ENCODE measurements at regions of chr17 and their contacts with region 1.

Region 1: DNA sequence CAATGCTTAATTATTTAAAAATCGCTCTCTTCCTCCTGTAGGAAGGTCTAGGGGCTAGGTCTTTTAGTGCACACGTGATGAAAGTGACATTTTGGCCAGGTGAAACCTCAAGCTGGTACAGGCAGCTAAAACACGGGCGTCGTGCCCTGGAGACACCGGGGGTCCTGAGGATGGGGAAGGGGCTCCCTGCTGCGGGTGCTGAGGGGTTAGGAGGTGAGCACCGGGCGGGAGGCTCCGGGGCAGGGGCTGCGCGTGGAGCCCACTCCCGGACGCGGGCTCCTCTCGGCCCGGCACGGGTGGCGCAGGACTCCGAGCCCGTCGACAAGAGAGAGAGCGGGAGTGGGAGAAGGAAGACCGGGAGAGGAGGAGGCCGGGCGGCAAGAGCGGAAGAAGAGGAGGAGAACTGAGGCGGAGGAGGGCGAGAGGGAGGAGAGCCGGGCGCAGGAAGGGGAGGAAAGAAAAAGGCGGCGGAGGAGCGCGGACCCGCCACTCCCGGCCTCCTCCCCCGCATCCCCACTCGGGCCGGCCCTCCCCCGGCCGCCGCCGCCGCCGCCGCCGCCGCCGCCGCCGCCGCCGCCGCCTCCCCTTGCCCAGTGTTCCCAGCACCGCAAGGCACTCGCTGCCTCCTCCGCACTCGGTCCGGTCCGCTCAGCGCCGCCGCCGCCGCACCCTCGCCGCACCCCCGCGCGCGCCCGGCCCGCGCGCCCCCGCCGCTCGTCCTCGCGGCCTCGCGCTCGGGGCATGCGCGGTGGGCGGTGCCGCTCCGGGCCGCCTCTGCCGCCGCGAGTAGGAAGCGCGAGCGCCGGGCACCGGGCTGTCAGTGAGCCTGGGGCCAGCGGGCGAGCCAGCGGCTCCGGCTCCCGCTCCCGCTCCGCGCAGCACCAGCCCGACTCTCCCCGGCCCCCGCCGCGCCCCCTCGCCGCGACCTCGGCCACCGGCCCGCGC is at the start of gene PRKCA:
- DNase-seq: peak; percentile 77 to 89 (median 82)
- H3K4me3 ChIP-seq: peak within 1 kb of the TSS; percentile 96
- H3K27ac ChIP-seq: peak within 1 kb of the TSS; percentile 57 to 87
- H3K4me1 ChIP-seq: peaks cover 9% of the 10 kb centered on the region
- H3K27me3 ChIP-seq: no peaks in the 10 kb centered on the region
- CTCF ChIP-seq: no peak
- EP300 ChIP-seq: no peak
- POLR2A ChIP-seq: peak; percentile 37
- total RNA-seq, gene PRKCA: 22.3 to 67.6 (median 45.0) TPM

Region 2: DNA sequence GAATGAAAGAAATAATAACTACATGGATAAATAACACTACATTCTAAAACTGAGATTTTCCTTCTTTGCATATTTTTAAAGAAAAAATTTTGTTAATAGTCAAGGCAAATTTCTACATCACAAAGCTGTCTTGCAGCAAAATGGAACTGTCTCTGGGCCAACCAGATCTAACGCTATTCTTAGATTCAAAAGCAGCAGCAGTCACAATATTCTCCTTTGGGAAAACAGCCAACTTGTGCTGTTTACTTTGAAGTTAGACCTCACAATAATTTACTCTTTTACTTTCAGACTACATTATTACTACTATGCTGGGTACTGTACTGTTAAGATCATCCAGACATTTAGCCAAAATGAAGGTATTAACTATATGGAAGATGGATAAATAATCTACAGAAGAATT is 299.3 kb before region 1 on chr17:
- intact Hi-C with region 1: no loop called
- DNase-seq: no peak
- H3K4me3 ChIP-seq: no peak overlapping the region
- H3K27ac ChIP-seq: no peak overlapping the region
- H3K4me1 ChIP-seq: no peaks in the 10 kb centered on the region
- H3K27me3 ChIP-seq: no peaks in the 10 kb centered on the region
- CTCF ChIP-seq: no peak
- EP300 ChIP-seq: no peak
- POLR2A ChIP-seq: no peak

Region 3: DNA sequence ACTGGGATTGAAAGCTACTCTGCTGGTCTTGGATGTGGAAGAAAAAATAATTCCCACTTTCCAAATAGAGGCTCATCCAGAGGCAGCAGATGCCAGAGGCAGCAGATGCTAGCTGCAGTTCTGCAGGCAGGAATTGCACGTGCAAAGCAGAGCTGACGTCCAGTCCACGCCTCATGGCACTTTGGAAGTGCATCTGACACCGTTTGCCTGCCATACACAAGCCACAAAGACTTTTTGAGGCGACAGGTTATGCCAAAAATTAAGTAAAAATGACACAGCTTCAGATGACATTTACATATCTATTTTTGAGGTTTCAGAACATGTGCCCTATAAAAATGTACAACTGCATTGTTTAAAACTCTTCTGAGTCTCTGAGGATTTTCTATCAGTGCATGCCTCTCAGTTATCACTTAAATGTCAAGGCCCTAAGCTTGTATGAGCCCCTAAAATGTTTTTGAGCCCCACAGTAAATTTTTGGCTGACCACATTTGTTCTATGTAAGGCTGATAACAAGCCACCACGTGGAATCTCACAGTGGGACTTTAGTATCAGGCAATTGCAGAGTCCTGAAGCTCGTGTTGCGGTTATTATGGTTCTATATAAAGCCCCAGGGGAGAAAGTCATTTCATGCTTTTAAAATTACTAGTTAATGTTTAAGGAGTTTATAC is 239.5 kb after region 1 on chr17:
- intact Hi-C with region 1: loop called in 1 of 4 experiments (anchors 10 kb)
- DNase-seq: peak in 3 of 5 donors; percentile 34 to 51 (median 49)
- H3K4me3 ChIP-seq: no peak overlapping the region
- H3K27ac ChIP-seq: peak overlapping the region in 1 of 2 donors; percentile 80
- H3K4me1 ChIP-seq: peaks cover 21% of the 10 kb centered on the region
- H3K27me3 ChIP-seq: no peaks in the 10 kb centered on the region
- CTCF ChIP-seq: no peak
- EP300 ChIP-seq: no peak
- POLR2A ChIP-seq: no peak

Region 4: DNA sequence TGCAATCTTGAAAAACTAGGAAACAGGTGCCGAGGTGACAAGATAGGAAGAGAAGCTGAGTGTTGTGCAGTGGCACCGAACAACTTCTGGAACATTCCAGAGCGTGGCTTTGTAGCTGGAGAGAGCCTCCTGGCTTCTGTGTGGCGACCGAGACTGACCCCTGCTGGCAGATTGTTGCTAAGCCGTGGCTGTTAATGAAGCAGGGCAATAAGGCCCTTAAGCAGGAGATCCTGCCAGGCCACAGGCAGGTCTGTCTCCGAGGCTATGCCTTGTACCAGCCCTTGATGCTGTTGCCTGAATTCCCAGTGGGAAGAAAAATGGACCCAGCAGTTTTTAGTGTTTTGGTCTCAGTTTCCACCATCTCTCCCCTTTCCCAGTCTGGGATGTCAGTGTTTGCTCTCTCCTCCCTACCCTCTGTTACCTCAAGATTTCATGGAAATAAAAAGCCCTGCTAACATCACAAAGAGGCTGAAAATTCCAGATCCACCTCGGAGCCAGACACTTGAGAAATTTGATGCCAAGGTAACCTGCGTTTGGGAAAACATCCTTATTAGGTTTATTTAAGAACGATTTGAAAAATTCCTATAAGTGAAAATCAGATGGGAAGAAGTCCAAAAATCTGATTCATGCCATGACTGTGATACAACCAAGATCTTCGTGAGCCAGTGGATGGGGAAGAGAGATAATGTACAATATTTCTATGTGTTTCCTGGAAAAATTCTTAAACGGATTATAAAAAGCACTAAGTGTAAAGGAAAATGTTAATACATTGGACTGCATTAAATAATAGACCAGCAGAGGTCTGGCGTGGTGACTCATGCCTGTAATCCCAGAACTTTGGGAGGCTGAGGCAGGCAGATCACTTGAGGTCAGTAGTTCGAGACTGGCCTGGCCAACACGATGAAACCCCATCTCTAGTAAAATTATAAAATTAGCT is 265.4 kb after region 1 on chr17:
- intact Hi-C with region 1: loop called in 1 of 4 experiments (anchors 5 kb)
- DNase-seq: peak; percentile 58 to 84 (median 72)
- H3K4me3 ChIP-seq: no peak overlapping the region
- H3K27ac ChIP-seq: no peak overlapping the region
- H3K4me1 ChIP-seq: peaks cover 3% of the 10 kb centered on the region
- H3K27me3 ChIP-seq: no peaks in the 10 kb centered on the region
- CTCF ChIP-seq: peak; percentile 30 to 35 (median 34)
- EP300 ChIP-seq: no peak
- POLR2A ChIP-seq: no peak

Measured in ovary (tissue), 10 donors.